Ovary (tissue), 10 donors: ENCODE measurements at regions of chr10 and their contacts with region 1.

Region 1: DNA sequence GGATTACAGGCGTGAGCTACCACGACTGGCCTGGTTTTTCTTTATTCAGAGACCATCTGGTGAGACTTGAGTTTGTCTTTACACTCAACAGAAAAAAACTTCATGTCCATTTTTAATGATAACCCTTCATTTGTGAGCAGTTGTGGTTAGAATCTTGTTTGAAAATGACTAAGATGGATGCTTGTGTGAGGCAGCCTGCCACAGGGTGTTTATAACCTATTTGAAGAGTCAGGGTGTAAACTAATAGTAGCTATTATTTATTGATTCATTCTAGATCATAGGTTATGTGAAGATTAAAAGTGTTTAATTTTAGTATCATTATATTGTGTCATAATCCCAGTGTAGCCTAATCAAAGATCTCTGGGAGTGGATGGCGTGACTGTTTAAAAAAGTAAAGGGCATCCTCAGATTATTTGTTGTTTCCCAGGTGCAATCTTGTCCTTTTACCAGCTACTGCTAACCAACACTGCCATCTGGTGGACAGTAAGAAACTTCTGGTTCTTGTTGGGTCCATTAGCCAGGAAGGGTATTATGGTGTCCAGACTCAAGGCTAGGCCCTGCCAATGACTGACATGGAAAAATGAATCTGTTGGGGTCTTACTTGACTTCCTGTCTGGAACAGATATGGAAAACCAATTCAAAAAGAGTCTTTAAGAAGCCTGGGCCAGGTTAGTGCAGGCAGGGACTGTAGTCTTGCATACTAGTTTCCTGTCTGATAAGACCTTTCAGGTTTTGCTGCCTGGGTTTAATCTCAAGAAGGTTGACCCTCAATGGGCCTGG is 24.9 kb downstream of the NRBF2 start:
- DNase-seq: peak in 2 of 5 donors; percentile 17 to 47
- H3K4me3 ChIP-seq: no peak overlapping the region
- H3K27ac ChIP-seq: no peak overlapping the region
- H3K4me1 ChIP-seq: no peaks in the 10 kb centered on the region
- H3K27me3 ChIP-seq: no peaks in the 10 kb centered on the region
- CTCF ChIP-seq: peak; percentile 65 to 70 (median 69)
- EP300 ChIP-seq: no peak
- POLR2A ChIP-seq: no peak

Region 2: GRCh38 chr10:61159253-61159652 is 1998.8 kb before region 1 on chr10:
- intact Hi-C with region 1: loop called in 1 of 4 experiments (anchors 10 kb)
- DNase-seq: no peak
- H3K4me3 ChIP-seq: no peak overlapping the region
- H3K27ac ChIP-seq: no peak overlapping the region
- H3K4me1 ChIP-seq: no peaks in the 10 kb centered on the region
- H3K27me3 ChIP-seq: no peaks in the 10 kb centered on the region
- CTCF ChIP-seq: no peak
- EP300 ChIP-seq: no peak
- POLR2A ChIP-seq: no peak

Region 3: DNA sequence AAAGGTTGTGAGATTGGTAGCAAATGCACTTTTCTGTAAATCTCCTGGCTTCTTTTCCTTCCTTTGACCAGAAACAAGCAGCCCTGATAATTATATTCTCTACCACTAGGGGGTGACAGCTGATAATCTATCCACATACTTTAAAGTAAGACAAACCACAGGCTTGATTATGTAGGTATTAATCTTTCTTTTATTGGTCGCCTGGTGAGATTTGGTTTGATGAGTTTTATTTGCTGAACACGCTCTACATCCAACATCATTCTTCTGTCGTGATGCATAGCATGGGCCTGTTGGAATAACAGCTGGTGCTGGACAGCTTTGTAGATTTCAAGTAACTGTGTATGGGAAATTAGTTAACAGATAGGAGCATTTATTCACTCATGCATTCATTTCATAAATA is 720.3 kb before region 1 on chr10:
- intact Hi-C with region 1: loop called in 1 of 4 experiments (anchors 5 kb)
- DNase-seq: no peak
- H3K4me3 ChIP-seq: no peak overlapping the region
- H3K27ac ChIP-seq: no peak overlapping the region
- H3K4me1 ChIP-seq: no peaks in the 10 kb centered on the region
- H3K27me3 ChIP-seq: no peaks in the 10 kb centered on the region
- CTCF ChIP-seq: peak; percentile 37 to 73 (median 73)
- EP300 ChIP-seq: no peak
- POLR2A ChIP-seq: no peak

Region 4: DNA sequence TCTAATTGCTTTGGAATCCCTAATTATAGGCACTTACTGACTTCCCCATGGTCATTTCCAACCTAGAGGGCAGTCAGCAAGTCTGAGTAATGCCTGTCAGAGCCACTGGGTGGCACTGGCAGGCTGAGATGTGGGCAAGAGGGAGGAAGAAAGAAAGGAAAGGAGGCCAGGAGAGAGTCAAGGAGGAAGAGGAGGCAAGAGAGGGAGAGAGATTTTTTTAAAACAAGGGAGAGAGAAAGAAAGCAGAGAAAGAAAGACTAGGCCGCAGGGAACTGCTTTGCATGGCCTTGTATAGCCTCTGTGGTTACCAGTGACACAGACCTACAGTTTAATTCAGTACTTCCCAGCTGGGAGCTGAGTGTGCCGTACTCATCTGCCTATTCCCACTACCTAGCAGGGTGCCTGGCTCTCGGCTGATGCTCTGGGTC is 563.9 kb before region 1 on chr10:
- intact Hi-C with region 1: loop called in 2 of 4 experiments (anchors 5 to 10 kb)
- DNase-seq: peak; percentile 26 to 71 (median 55)
- H3K4me3 ChIP-seq: no peak overlapping the region
- H3K27ac ChIP-seq: no peak overlapping the region
- H3K4me1 ChIP-seq: no peaks in the 10 kb centered on the region
- H3K27me3 ChIP-seq: no peaks in the 10 kb centered on the region
- CTCF ChIP-seq: peak; percentile 50 to 72 (median 65)
- EP300 ChIP-seq: no peak
- POLR2A ChIP-seq: no peak

Region 5: DNA sequence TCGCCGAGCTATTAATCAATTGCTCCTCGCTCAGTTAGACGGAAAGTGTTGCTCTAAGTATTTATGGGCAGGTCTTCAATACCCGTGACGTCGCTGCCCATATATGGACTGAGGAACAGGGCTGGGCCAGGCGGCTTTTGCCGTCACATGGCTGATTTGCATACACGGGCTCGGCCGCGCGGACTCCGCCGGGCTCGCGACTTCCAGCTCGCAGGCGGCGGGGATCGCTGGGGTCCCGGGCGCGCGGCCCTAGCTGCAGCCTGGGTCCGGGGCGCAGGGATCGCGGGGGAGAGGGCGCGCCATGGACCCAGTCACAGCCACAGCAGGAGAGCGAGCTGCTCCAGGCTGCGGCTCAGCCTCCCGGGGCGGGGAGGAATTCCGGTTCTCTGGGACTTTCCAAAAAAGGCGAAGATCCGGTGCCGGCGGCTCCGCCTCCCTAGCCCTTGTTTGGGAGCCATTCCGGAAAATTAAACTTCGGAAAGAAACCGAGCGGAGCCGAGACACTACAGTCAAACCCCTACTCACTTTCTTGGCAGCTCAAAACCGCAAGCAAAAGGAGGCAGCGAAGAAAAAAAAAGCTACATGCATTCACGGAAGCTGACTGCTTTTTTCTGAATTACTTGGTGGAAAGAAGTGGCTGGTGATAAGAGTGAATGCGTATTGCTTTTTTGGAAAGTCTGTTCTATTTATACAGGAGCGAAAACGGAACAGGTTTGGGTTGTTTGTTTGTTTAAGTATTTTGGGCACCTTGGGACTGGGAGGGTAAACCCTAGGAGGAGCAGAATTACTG is 341.5 kb before region 1 on chr10 and contains the start of gene EGR2:
- intact Hi-C with region 1: loop called in 1 of 4 experiments (anchors 10 kb)
- DNase-seq: peak; percentile 84 to 93 (median 91)
- H3K4me3 ChIP-seq: peak within 1 kb of the TSS; percentile 81
- H3K27ac ChIP-seq: peak within 1 kb of the TSS; percentile 81 to 84
- H3K4me1 ChIP-seq: peaks cover 18% of the 10 kb centered on the region
- H3K27me3 ChIP-seq: no peaks in the 10 kb centered on the region
- CTCF ChIP-seq: no peak
- EP300 ChIP-seq: no peak
- POLR2A ChIP-seq: peak; percentile 16
- total RNA-seq, gene EGR2: 0.48 to 13.0 (median 4.6) TPM

Region 6: DNA sequence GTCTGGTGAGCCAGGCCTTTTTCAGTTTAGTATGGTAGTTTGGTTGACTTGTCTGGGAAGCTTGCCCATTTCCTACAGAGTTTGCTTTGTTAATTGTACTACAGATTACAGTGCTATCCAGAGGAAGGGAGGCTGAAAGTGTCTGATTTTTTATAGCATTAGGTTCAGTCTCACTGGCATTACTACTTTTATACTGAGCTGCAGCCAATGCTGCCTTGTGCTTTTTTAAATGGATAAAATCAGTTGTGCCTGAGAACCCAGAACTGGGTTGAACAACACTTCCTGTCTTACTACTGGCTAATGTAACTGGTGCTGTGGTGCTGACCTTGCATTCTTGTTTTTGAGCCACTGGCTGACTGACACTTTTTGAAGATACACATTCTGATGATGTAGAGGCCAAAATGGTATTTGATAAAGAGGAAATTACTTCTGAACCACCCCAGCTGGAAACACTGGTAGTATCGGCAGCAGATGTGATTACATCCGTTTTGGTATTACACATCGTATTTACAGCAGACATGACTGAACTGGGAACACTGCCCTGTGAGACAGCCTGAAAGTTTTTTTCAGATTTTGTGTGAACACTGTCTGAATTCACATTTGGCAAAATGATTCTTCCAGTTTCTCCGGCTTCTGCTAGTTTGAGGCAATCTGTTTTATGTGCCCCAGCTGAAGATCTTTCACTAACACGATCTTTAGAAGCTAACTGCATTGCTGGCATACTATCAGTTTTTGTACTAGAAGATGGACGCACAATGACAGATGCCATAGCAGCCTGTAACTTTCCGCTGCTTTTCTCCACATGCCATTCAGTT is 49.2 kb after region 1 on chr10:
- intact Hi-C with region 1: no loop called
- DNase-seq: peak in 3 of 5 donors; percentile 21 to 49 (median 46)
- H3K4me3 ChIP-seq: no peak overlapping the region
- H3K27ac ChIP-seq: peak overlapping the region in 1 of 2 donors; percentile 44
- H3K4me1 ChIP-seq: peaks cover 14% of the 10 kb centered on the region
- H3K27me3 ChIP-seq: no peaks in the 10 kb centered on the region
- CTCF ChIP-seq: no peak
- EP300 ChIP-seq: no peak
- POLR2A ChIP-seq: no peak